Posterior vena cava (tissue), 2 donors: ENCODE measurements at regions of chr14 and their contacts with region 1.

Region 1: DNA sequence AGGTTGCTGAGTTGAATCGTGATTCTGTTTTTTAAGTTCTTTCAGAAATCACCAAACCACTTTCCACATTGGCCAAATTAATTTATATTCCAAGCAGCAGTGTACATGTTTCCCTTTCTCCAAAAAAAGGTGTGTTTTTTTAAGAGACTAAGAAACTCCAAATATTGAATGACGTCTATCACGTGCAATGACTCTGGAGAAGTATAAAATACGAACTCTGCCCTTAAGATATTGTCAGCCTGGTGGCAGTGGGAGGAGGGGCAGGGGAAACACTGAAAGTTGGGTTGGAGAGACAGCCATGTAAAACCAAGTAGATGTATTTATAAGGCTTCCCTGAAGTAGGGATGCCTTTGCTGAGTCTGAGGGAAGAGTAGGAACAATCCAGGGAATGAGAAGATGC is 50.1 kb upstream of the DHRS4 start:
- DNase-seq: no peak

Region 2: GRCh38 chr14:23631702-23632460 is 271.6 kb before region 1 on chr14:
- intact Hi-C with region 1: loop called in 1 of 2 experiments (anchors 10 kb)
- DNase-seq: peak; percentile 89